ENCODE measurements at regions of chr5 and their contacts with region 1.

Region 1: GRCh38 chr5:142713121-142713706 is 27.3 kb upstream of the FGF1 start:
- DNase-seq: peak; percentile 85 to 98
- H3K4me3 ChIP-seq: peak overlapping the region; percentile 27 to 67 (median 62); a peak in 7 of 8 replicates
- H3K27ac ChIP-seq: no peak overlapping the region
- H3K4me1 ChIP-seq: peaks cover under 1 to 16% (median 6%) of the 10 kb centered on the region in 4 experiments; a peak in 6 of 7 replicates
- H3K27me3 ChIP-seq: no peaks in the 10 kb centered on the region
- CTCF ChIP-seq: peak; percentile 75 to 97 (median 89)
- EP300 ChIP-seq: 0 out of 3 replicates have a peak, but pooled peaks of 1 of the 2 experiments have one; percentile 48
- POLR2A ChIP-seq: peak in 1 of 2 experiments; percentile 63; a peak in 2 of 3 replicates
- RAD21 ChIP-seq: peak; percentile 29 to 40; a peak in 3 of 4 replicates

Region 2: DNA sequence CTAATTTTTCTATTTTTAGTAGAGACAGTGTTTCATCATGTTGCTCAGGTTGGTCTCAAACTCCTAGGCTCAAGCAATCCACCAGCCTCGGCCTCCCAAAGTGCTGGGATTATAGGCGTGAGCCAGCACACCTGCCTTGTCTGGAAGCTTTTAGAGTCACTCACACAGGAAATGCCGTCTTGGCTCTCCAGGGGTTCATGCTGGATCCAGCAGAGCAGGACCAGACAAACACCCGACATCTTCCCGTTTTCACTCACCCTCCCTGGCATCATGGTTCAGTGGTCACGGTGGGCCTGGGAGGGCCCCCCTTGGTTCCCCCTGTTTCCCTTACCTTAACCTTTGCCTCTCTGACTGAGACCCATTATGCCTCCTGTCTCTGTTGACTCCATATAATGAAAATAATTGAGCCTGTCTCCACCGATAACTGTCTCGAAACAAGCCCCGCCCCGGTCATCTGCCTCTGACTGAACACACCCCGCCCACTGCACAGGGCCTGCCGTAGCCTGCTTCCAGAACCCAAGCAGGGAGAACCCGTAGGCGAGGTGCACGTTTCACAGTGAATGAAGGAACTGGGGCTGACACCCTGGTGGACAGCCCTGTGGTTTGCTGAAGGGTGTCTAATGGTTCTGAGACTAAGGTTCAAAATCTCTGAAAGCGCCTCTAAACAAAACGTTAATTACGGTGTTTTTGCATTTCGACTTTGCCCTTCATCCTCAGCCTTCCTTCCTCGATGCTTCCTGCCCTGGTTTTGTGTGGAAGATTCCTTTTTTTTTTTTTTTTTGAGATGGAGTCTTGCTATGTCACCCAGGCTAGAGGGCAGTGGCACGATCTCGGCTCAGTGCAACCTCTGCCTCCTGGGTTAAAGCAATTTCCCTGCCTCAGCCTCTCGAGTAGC is 348.7 kb before region 1 on chr5:
- CTCF ChIA-PET with region 1: no interaction called
- POLR2A ChIA-PET with region 1: no interaction called
- DNase-seq: no peak
- H3K4me3 ChIP-seq: no peak overlapping the region
- H3K27ac ChIP-seq: no peak overlapping the region; the same call in 1 of the 2 replicates
- H3K4me1 ChIP-seq: peaks cover 11 to 25% (median 20%) of the 10 kb centered on the region in 4 experiments
- H3K27me3 ChIP-seq: no peaks in the 10 kb centered on the region; a peak in 1 of 7 replicates
- CTCF ChIP-seq: no peak
- EP300 ChIP-seq: no peak
- POLR2A ChIP-seq: no peak
- RAD21 ChIP-seq: no peak

Region 3: DNA sequence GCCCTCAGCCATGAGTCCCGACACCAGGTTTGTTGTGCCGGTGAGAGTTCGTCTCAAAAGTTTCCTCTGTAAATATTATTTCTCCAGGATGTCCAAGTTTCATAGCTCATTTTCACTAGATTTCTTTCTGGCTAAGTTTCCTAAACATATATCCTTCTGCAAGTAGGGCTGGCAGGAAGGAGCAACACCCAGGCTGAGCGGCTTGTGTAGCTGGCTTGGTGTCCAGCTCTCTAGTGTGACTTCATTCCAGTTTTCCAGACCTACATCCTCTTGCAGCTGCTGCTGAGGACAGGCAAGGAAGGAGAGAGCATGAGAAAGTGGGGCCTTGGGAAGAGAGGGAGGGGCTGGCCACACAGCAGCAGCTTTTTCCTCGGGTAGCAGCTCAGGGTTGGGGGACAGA is 107.6 kb before region 1 on chr5:
- CTCF ChIA-PET with region 1: interaction called, 12 read pairs
- POLR2A ChIA-PET with region 1: no interaction called
- DNase-seq: no peak
- H3K4me3 ChIP-seq: no peak overlapping the region
- H3K27ac ChIP-seq: no peak overlapping the region
- H3K4me1 ChIP-seq: no peaks in the 10 kb centered on the region; a peak in 1 of 7 replicates
- H3K27me3 ChIP-seq: no peaks in the 10 kb centered on the region
- CTCF ChIP-seq: no peak
- EP300 ChIP-seq: no peak
- POLR2A ChIP-seq: no peak
- RAD21 ChIP-seq: no peak

Region 4: DNA sequence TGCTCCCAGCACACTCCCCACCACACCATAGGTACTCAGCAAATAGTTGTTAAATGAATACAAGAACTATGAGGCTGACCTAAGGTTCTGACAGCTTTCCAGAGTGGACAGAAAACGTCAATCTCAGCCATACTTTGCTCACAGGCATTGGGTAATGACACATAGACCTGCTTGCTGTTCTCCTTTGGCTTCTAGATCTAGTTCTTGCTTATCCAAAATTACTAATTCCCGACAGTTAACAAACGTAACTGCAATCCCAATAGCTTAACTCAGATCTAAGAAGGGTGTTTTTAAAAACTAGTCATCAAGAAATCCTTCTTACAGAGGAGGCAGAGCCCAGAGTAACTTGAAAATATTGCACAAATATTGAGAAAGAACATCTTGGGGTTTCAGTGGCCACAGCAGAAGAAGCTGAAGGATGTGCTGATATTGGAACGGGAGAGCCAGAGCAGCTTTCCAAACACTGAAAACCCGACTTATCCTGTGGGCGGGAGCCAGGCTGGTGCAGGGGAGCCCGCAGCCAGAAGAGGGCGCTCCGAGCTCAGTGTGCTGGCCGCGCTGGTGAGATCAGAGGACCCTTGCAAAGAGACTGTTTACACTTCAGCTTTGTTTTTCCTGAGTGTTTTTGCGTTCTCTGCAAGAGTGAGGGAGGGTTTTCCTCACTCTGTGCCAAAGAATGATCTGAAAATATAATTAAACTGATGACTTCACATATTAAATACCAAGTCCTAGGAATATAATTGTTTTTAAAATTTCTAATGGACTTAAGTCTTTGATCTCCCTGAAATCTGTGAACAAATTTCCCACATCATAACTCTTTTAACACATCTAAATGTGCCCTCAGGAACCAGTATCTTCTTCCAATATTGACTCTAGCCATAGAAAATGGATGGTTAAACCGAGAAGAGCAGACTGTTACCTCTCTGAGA is 57.6 kb before region 1 on chr5:
- CTCF ChIA-PET with region 1: interaction called, 605 read pairs
- POLR2A ChIA-PET with region 1: no interaction called
- DNase-seq: peak; percentile 53 to 96
- H3K4me3 ChIP-seq: no peak overlapping the region
- H3K27ac ChIP-seq: no peak overlapping the region
- H3K4me1 ChIP-seq: no peaks in the 10 kb centered on the region
- H3K27me3 ChIP-seq: no peaks in the 10 kb centered on the region
- CTCF ChIP-seq: peak; percentile 98 to 99 (median 99)
- EP300 ChIP-seq: no peak
- POLR2A ChIP-seq: no peak
- RAD21 ChIP-seq: peak; percentile 98

Region 5: GRCh38 chr5:142699184-142699720 is 14.0 kb before region 1 on chr5:
- CTCF ChIA-PET with region 1: interaction called, 169 read pairs
- POLR2A ChIA-PET with region 1: interaction called, 26 read pairs
- DNase-seq: peak; percentile 74 to 96
- H3K4me3 ChIP-seq: no peak overlapping the region
- H3K27ac ChIP-seq: no peak overlapping the region
- H3K4me1 ChIP-seq: peaks cover 3 to 30% (median 14%) of the 10 kb centered on the region in 4 experiments
- H3K27me3 ChIP-seq: no peaks in the 10 kb centered on the region
- CTCF ChIP-seq: peak; percentile 83 to 99 (median 97)
- EP300 ChIP-seq: no peak
- POLR2A ChIP-seq: no peak
- RAD21 ChIP-seq: peak; percentile 100

Region 6: GRCh38 chr5:142783601-142784341 is 70.6 kb after region 1 on chr5:
- CTCF ChIA-PET with region 1: interaction called, 13 read pairs
- POLR2A ChIA-PET with region 1: interaction called, 3 read pairs
- DNase-seq: no peak
- H3K4me3 ChIP-seq: no peak overlapping the region
- H3K27ac ChIP-seq: no peak overlapping the region
- H3K4me1 ChIP-seq: peaks cover 14 to 25% (median 17%) of the 10 kb centered on the region in 4 experiments
- H3K27me3 ChIP-seq: no peaks in the 10 kb centered on the region
- CTCF ChIP-seq: no peak
- EP300 ChIP-seq: no peak
- POLR2A ChIP-seq: no peak
- RAD21 ChIP-seq: no peak

Region 7: GRCh38 chr5:142900927-142901326 is 187.7 kb after region 1 on chr5:
- CTCF ChIA-PET with region 1: interaction called, 21 read pairs
- POLR2A ChIA-PET with region 1: no interaction called
- DNase-seq: no peak
- H3K4me3 ChIP-seq: no peak overlapping the region
- H3K27ac ChIP-seq: no peak overlapping the region; the same call in 1 of the 2 replicates
- H3K4me1 ChIP-seq: peaks cover 5 to 14% (median 11%) of the 10 kb centered on the region in 4 experiments; a peak in 6 of 7 replicates
- H3K27me3 ChIP-seq: no peaks in the 10 kb centered on the region
- CTCF ChIP-seq: no peak
- EP300 ChIP-seq: no peak
- POLR2A ChIP-seq: no peak
- RAD21 ChIP-seq: no peak